ENCODE measurements at regions of chr6 and their contacts with region 1.

Region 1: DNA sequence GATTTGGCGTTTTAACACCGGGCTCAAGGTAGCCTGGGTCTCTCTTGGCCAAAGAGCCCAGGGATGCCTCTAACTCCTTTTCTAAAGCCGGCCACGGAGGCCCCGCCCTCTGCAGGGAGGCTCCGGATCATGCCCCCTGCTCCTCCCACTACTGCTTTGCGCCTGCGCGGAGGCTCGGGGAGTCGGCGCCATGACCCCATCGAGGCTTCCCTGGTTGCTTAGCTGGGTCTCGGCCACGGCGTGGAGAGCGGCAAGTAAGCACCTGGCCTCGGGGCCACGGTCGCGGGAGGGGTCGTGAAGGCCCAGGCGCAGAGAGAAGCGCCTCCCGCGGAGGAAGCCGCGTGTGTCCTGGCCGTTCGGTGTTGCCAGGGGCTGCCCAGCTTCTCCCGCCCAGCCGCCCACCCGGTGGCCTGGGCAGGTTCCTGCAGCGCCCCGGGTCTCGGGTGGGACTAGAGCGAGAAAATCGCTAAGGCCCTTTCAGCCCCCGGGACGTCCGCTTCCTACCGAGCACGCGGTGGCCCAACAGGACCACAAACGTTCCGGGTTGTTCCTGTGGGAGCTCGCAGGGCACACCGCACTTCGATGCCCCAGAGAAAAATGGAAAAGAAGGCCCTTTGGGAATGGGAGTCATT is at the start of gene SDHAF4:
- DNase-seq: peak; percentile 95
- ATAC-seq: peak; percentile 100
- total RNA-seq, gene SDHAF4: 15.5 to 16.4 TPM

Region 2: DNA sequence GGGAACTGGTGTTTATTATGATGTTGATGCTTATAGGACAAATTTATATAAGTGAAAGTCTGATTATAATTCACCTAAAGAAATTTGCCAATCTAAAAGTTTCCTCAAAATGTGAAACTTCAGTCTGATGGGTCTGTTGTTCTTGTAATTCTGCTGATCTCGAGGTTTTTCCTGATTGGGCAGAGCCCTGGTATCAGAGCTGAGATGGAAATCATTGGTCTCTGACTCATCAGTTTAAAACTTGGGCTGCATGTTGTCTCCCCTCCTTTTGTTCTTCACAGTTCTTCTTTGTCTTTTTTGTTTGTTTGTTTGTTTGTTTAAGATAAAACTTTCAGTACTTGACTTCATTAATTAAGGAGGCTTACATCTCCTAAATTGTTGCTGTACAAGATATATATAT is 106.7 kb after region 1 on chr6:
- intact Hi-C with region 1: loop called in 1 of 2 experiments (anchors 10 kb)
- DNase-seq: no peak
- ATAC-seq: peak in 1 of 2 donors; percentile 71

Region 3: GRCh38 chr6:70686548-70687133 is 119.8 kb after region 1 on chr6:
- intact Hi-C with region 1: loop called in 1 of 2 experiments (anchors 5 kb)
- DNase-seq: no peak
- ATAC-seq: peak in 1 of 2 donors; percentile 49